ENCODE measurements at regions of chr12 and their contacts with region 1.

Region 1: DNA sequence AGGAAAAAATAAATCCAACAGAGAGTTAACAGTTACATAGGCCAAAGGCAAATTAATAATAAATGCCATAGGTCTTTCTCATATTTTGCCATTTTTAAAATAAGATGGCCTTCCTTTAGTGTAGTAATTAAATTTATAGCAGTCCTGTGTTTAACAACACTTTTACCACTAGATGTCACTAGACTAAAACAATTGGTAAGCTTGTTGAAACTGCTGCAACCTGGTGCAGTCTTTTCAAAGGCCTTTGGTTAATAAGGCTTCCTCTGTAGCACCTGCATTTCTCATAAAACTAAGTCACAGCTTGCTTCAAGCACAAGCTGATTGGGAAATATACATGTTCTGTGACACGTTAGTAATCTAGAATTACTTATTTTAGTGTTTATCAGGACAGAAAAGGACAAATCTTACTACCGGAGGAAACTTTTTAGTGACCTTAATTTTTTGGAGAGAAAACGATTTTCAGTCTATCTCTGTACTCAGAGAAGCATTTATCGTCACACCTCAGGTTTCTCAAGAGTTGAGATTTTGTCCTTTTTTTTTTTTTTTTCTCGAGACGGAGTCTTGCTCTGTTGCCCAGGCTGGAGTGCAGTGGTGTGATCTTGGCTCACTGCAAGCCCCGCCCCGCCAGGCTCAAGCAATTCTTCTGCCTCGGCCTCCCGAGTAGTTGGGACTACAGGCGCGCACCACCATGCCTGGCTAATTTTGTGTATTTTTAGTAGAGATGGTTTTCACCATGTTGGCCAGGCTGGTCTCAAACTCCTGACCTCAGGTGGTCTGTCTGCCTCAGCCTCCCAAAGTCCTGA is 20.0 kb downstream of the BORCS5 start:
- DNase-seq: no peak
- H3K4me3 ChIP-seq: no peak overlapping the region
- H3K27me3 ChIP-seq: no peaks in the 10 kb centered on the region
- CTCF ChIP-seq: peak; percentile 55

Region 2: DNA sequence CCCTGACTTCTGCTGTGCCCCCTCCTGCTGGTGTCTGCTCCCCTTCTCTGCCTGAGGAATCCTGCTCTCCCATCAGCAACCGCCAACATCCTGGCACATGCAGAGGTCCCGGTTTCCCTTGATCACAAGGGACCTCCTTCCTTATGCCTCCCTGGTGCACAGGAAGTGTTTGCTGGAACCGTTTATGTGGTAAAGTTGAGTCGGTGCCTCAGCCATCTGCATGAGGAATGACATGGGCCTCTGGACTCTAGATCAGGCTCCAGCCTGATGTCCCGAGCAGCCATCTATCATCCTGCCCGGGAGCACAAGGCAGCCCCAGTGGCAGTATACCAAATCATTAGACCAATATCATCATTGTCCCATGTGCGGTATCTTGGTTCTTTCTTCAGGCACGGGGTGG is 70.4 kb after region 1 on chr12:
- CTCF ChIA-PET with region 1: no interaction called
- POLR2A ChIA-PET with region 1: no interaction called
- DNase-seq: no peak
- H3K4me3 ChIP-seq: no peak overlapping the region
- H3K27me3 ChIP-seq: no peaks in the 10 kb centered on the region
- CTCF ChIP-seq: no peak

Region 3: DNA sequence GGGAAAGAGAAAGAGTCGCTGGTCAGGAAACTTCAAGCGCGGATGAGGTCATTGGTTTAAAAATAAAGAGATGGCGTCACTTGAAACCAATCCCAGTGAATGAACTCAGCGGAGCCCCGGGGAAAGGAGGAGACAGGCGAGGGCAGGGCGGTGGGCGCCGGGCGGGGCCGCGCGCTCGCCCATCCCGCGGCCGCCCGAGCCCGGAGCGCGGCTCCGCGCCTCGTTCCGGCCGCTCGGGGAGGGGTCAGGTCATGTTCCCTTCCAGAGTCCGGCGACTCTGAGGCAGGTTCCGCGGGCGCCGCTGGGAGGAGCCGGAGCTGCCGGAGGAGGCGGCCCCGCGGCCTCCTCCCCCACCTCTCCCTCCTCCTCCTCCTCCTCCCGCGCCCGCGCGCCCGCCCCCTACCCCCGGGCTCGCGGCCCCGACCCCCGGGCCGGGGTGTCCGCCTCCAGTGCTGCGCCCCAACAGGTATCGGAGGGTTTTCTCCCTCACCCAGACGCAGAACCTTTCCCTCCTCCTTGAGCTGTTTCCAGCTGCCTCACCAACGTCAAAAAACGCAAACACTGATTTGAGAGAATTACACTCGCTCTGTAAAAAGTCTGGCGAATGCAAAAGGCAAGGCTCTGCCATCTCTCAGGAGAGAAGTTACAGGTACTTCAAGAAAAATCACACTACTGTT is 185.9 kb after region 1 on chr12 and contains the start of gene DUSP16:
- CTCF ChIA-PET with region 1: interaction called, 35 read pairs
- POLR2A ChIA-PET with region 1: no interaction called
- DNase-seq: peak; percentile 88
- H3K4me3 ChIP-seq: peak within 1 kb of the TSS; percentile 82
- H3K27me3 ChIP-seq: no peaks in the 10 kb centered on the region
- CTCF ChIP-seq: peak; percentile 16; the same call in 1 of the 2 replicates
- polyA plus RNA-seq, gene DUSP16: 5.5 and 7.9 TPM in 2 replicates

Region 4: GRCh38 chr12:12654691-12655460 is 278.0 kb after region 1 on chr12:
- CTCF ChIA-PET with region 1: interaction called, 15 read pairs
- POLR2A ChIA-PET with region 1: no interaction called
- DNase-seq: no peak
- H3K4me3 ChIP-seq: no peak overlapping the region
- H3K27me3 ChIP-seq: no peaks in the 10 kb centered on the region
- CTCF ChIP-seq: no peak

Region 5: GRCh38 chr12:12704593-12705230 is 327.9 kb after region 1 on chr12:
- CTCF ChIA-PET with region 1: interaction called, 63 read pairs
- POLR2A ChIA-PET with region 1: no interaction called
- DNase-seq: peak; percentile 39
- H3K4me3 ChIP-seq: no peak overlapping the region
- H3K27me3 ChIP-seq: no peaks in the 10 kb centered on the region
- CTCF ChIP-seq: peak; percentile 95

Measured in BJ (cell line).